HCT116 (cell line): ENCODE measurements at regions of chr5 and their contacts with region 1.

Region 1: DNA sequence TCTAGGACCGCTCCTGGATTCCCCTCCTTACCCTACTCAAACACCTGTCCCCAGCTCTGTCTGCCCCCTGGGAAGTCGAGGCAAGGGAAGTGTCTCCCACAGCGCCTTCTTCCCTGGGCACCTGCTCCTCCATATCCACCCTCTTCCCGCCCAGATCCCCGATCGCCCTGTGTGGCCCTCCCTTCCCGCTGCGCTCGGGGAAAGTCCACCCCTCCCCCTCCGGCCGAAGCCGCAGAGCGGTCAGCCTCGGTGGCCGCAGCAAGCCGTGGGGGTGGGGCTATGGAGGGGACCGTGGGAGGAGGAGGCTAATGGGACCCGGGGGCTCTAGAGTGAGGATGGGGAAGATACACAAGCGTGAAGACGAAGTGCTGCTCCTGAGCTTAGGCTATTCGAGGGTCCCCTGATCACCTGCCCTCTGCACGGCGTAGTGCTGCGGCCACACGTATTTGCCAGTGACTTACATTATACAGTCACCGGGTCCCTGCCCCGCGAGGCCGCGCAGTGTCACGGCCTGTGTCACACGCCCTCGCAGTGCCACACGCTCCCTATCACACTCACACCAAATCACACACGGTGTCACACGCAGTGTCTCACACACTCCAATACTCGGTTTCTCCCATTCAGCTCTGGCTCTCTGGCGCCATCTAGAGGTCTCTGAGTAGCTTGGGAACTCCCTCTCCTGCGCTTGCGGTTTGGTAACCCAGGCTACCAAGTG is 658 bp upstream of the PCDH1 start:
- DNase-seq: peak; percentile 86
- ATAC-seq: peak; percentile 71
- H3K4me3 ChIP-seq: peak overlapping the region; percentile 61 to 87
- H3K27ac ChIP-seq: peak overlapping the region; percentile 40; the same call in 1 of the 2 replicates
- H3K4me1 ChIP-seq: peaks cover 13 to 46% of the 10 kb centered on the region in 2 experiments; a peak in 3 of 4 replicates
- H3K27me3 ChIP-seq: peaks cover 4% of the 10 kb centered on the region; the same call in 1 of the 2 replicates
- CTCF ChIP-seq: peak in 2 of 3 experiments; percentile 96 to 99; a peak in 4 of 6 replicates
- POLR2A ChIP-seq: no peak
- RAD21 ChIP-seq: no peak

Region 2: GRCh38 chr5:141681695-141682641 is 196.9 kb before region 1 on chr5 and contains the start of gene ARAP3:
- CTCF ChIA-PET with region 1: no interaction called
- POLR2A ChIA-PET with region 1: interaction called, 10 read pairs
- RAD21 ChIA-PET with region 1: no interaction called
- intact Hi-C with region 1: no loop called
- DNase-seq: peak; percentile 40
- ATAC-seq: peak; percentile 86
- H3K4me3 ChIP-seq: peak within 1 kb of the TSS; percentile 56 to 61
- H3K27ac ChIP-seq: peak within 1 kb of the TSS; percentile 66
- H3K4me1 ChIP-seq: peaks cover 18 to 30% of the 10 kb centered on the region in 2 experiments
- H3K27me3 ChIP-seq: no peaks in the 10 kb centered on the region
- CTCF ChIP-seq: no peak
- POLR2A ChIP-seq: no peak
- RAD21 ChIP-seq: no peak
- total RNA-seq, gene ARAP3: 15.1 TPM

Region 3: DNA sequence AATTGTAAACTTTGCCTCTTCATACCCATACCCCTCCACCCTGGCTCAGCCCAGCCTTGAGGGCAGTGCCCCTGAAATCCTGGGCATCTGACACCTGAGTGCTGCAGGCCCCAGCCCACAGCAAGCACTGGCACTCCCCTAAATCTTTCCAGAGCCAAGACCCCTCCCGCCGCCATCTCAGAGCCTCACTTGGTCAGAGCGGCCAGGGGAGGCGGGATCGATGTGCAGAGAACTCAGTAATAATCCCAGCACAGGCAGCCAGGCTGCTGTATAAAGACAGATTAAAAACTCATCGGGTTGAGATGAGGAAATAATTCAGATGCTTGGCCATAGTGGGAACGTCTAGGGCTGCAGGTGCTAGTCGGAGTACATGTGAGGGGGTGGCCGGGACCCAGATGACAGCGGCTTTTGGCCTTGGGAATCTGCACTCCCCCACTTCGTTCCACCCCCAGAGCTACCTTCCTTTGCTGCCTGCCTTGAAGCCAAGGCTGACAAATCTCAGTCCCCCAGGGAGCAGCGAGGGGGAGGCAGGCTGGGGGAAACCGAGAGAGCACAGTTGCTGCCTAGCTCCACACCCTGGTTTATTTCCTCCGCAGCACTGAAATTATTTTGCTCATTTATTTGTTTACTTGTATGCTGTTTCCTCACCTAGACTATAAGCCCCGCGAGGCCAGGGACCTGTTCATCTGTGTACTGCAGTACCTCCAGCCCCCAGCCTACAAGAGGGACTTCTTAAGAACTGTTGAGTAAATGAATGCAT is 177.3 kb before region 1 on chr5:
- CTCF ChIA-PET with region 1: interaction called, 15 read pairs
- POLR2A ChIA-PET with region 1: no interaction called
- RAD21 ChIA-PET with region 1: interaction called in 1 of 2 experiments, 5 read pairs
- intact Hi-C with region 1: loop called (anchors 1 kb)
- DNase-seq: no peak
- ATAC-seq: peak; percentile 53
- H3K4me3 ChIP-seq: no peak overlapping the region
- H3K27ac ChIP-seq: no peak overlapping the region
- H3K4me1 ChIP-seq: peaks cover 0 to 7% of the 10 kb centered on the region in 2 experiments; a peak in 1 of 4 replicates
- H3K27me3 ChIP-seq: no peaks in the 10 kb centered on the region
- CTCF ChIP-seq: no peak
- POLR2A ChIP-seq: no peak
- RAD21 ChIP-seq: no peak

Region 4: GRCh38 chr5:141813789-141814602 is 64.9 kb before region 1 on chr5:
- CTCF ChIA-PET with region 1: interaction called, 8 read pairs
- POLR2A ChIA-PET with region 1: no interaction called
- RAD21 ChIA-PET with region 1: interaction called in 1 of 2 experiments, 3 read pairs
- intact Hi-C with region 1: loop called (anchors 1 kb)
- DNase-seq: peak; percentile 36
- ATAC-seq: peak; percentile 95
- H3K4me3 ChIP-seq: no peak overlapping the region
- H3K27ac ChIP-seq: no peak overlapping the region
- H3K4me1 ChIP-seq: no peaks in the 10 kb centered on the region; a peak in 1 of 4 replicates
- H3K27me3 ChIP-seq: 0 out of 2 replicates have a peak, but pooled peaks cover 5% of the 10 kb centered on the region
- CTCF ChIP-seq: peak; percentile 72 to 93 (median 87); a peak in 5 of 6 replicates
- POLR2A ChIP-seq: no peak
- RAD21 ChIP-seq: peak; percentile 85

Region 5: GRCh38 chr5:141889282-141889871 is 10.5 kb after region 1 on chr5:
- CTCF ChIA-PET with region 1: interaction called, 13 read pairs
- POLR2A ChIA-PET with region 1: no interaction called
- RAD21 ChIA-PET with region 1: no interaction called
- intact Hi-C with region 1: no loop called
- DNase-seq: no peak
- ATAC-seq: peak; percentile 76
- H3K4me3 ChIP-seq: no peak overlapping the region
- H3K27ac ChIP-seq: no peak overlapping the region
- H3K4me1 ChIP-seq: no peaks in the 10 kb centered on the region
- H3K27me3 ChIP-seq: no peaks in the 10 kb centered on the region
- CTCF ChIP-seq: peak; percentile 37 to 70 (median 55); a peak in 4 of 6 replicates
- POLR2A ChIP-seq: no peak
- RAD21 ChIP-seq: peak; percentile 69

Region 6: GRCh38 chr5:141976176-141976575 is 97.3 kb after region 1 on chr5:
- CTCF ChIA-PET with region 1: no interaction called
- POLR2A ChIA-PET with region 1: no interaction called
- RAD21 ChIA-PET with region 1: no interaction called
- intact Hi-C with region 1: no loop called
- DNase-seq: no peak
- ATAC-seq: no peak
- H3K4me3 ChIP-seq: no peak overlapping the region
- H3K27ac ChIP-seq: no peak overlapping the region
- H3K4me1 ChIP-seq: no peaks in the 10 kb centered on the region
- H3K27me3 ChIP-seq: no peaks in the 10 kb centered on the region
- CTCF ChIP-seq: no peak
- POLR2A ChIP-seq: no peak
- RAD21 ChIP-seq: no peak